Cardiac septum (tissue), 1 donor: ENCODE measurements at regions of chr20 and their contacts with region 1.

Region 1: GRCh38 chr20:58650776-58651558 is at the start of gene STX16:
- DNase-seq: peak; percentile 95
- total RNA-seq, gene STX16: 33.1 TPM

Region 2: DNA sequence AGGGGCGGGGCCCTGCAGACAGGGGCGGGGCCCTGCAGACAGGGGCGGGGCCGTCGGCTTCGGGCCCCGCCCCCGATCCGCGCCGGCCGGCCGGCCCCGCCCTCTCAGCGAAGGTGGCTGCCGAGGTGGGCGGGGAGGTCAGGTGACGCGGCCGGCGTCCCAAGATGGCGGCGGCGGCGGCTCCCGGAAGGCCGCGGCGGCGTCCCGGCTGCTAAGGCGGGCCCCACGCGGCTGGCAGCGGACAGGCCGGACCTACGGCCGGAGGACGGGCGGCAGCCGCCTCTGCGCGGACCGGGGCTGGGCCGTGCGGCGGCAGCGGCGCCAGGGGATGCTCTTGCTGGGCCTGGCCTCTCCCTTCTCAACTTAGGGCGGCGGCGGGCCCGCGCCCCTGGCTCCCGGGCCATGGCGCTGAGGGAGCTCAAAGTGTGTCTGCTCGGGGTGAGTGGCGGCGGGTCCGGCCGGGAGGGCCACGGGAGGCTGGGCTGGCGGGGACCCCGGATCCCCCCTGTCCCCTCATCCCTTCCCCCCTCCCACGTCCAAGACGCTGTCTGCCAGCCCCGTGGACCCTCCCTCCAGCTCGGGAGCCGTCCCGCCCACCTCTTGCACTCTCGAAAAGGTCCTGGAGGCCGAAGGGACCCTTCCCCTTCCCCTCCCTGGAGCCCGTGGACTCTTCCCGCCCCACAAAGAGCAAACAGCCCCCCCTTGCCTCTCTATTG is 341.2 kb before region 1 on chr20 and contains the start of gene RAB22A:
- intact Hi-C with region 1: loop called (anchors 2 kb)
- DNase-seq: peak; percentile 95
- total RNA-seq, gene RAB22A: 9.8 TPM

Region 3: GRCh38 chr20:58692594-58693226 is 41.7 kb after region 1 on chr20 and contains the start of gene NPEPL1:
- intact Hi-C with region 1: loop called (anchors 2 kb)
- DNase-seq: no peak
- total RNA-seq, gene NPEPL1: 31.5 TPM

Region 4: DNA sequence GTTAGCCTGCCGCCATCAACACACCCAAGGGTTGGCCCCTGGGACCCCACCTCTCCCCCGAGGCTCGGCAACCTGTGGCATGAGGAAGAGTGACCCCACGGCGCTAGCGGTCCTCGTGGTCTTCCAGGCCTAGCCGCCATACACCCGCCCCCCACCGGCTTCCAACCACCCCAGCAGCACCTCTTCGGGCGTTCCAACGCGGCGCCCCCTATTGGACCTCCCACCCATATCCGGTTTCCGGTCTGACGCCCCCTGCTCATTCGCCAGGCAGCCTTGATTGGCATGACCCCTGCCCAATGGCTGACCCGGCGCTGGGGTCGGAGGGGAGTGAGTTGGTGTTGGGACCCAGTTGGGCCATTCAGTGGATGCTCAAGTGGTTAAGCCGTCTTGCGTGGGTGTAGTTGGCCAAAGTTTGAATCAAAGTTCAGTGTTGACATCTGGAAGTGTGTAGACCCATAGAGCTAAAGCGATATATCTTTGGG is 199.8 kb after region 1 on chr20 and contains the start of gene GNAS-AS1:
- intact Hi-C with region 1: loop called (anchors 10 kb)
- DNase-seq: peak; percentile 86
- total RNA-seq, gene GNAS-AS1: 0.75 TPM

Region 5: DNA sequence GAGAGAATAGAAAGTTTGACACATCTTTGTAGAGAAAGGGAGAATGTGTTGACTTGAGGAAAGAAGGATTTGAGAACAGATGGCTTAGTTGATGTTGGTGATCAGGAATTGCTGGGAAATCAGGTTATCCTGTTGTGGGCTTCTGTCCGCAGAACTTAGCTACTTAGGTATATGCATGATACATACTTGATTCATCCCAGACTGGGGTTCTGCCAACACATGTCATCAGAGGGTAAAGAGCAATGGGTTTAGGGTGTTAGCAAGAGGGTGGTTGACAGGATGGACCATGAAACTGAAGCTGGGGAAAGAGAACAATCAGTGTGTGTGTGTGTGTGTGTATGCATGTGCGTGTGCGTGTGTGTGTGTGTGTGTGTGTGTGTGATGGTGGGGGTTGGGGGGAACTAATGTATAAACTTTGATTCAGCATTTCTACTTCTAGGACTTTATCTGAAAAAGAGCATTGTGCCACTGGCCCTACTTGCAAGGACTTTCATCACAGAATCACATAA is 279.6 kb after region 1 on chr20:
- intact Hi-C with region 1: no loop called
- DNase-seq: no peak